Panc1 (cell line): ENCODE measurements at regions of chr10 and their contacts with region 1.

Region 1: GRCh38 chr10:6612371-6612770 is 32.3 kb upstream of the PRKCQ start:
- DNase-seq: no peak
- ATAC-seq: no peak
- H3K4me3 ChIP-seq: no peak overlapping the region
- H3K27ac ChIP-seq: no peak overlapping the region
- H3K4me1 ChIP-seq: no peaks in the 10 kb centered on the region
- H3K27me3 ChIP-seq: no peaks in the 10 kb centered on the region
- CTCF ChIP-seq: no peak

Region 2: GRCh38 chr10:6431861-6432260 is 180.5 kb before region 1 on chr10:
- CTCF ChIA-PET with region 1: interaction called, 12 read pairs
- POLR2A ChIA-PET with region 1: no interaction called
- in situ Hi-C with region 1: no loop called
- intact Hi-C with region 1: no loop called
- DNase-seq: no peak
- ATAC-seq: no peak
- H3K4me3 ChIP-seq: no peak overlapping the region
- H3K27ac ChIP-seq: no peak overlapping the region
- H3K4me1 ChIP-seq: no peaks in the 10 kb centered on the region
- H3K27me3 ChIP-seq: no peaks in the 10 kb centered on the region
- CTCF ChIP-seq: no peak

Region 3: GRCh38 chr10:6583447-6583846 is 28.9 kb before region 1 on chr10:
- CTCF ChIA-PET with region 1: no interaction called
- POLR2A ChIA-PET with region 1: no interaction called
- in situ Hi-C with region 1: no loop called
- intact Hi-C with region 1: no loop called
- DNase-seq: no peak
- ATAC-seq: no peak
- H3K4me3 ChIP-seq: no peak overlapping the region
- H3K27ac ChIP-seq: no peak overlapping the region
- H3K4me1 ChIP-seq: no peaks in the 10 kb centered on the region
- H3K27me3 ChIP-seq: no peaks in the 10 kb centered on the region; the same call in 1 of the 2 replicates
- CTCF ChIP-seq: no peak

Region 4: DNA sequence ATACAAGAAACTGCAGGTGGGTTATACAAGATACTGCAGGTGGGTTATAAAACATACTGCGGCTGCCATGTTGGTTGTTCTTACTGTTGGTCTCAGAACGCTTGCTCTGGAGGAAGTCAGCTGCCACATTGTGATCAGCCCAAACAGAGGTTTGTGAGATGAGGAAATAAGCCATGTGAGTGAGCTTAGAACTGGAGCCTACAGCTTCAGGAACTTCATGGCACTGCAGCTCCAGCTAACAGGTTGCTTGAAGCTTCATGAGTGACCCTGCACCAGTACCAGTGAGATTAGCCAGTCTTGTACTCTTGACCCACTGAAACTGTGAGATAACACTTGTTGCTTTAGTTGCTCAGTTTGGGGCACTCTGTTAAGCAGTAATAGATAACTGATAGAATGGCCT is 42.2 kb after region 1 on chr10:
- CTCF ChIA-PET with region 1: no interaction called
- POLR2A ChIA-PET with region 1: no interaction called
- in situ Hi-C with region 1: no loop called
- intact Hi-C with region 1: no loop called
- DNase-seq: no peak
- ATAC-seq: no peak
- H3K4me3 ChIP-seq: no peak overlapping the region
- H3K27ac ChIP-seq: no peak overlapping the region
- H3K4me1 ChIP-seq: no peaks in the 10 kb centered on the region
- H3K27me3 ChIP-seq: no peaks in the 10 kb centered on the region
- CTCF ChIP-seq: no peak